PC-3 (cell line): ENCODE measurements at regions of chr16 and their contacts with region 1.

Region 1: DNA sequence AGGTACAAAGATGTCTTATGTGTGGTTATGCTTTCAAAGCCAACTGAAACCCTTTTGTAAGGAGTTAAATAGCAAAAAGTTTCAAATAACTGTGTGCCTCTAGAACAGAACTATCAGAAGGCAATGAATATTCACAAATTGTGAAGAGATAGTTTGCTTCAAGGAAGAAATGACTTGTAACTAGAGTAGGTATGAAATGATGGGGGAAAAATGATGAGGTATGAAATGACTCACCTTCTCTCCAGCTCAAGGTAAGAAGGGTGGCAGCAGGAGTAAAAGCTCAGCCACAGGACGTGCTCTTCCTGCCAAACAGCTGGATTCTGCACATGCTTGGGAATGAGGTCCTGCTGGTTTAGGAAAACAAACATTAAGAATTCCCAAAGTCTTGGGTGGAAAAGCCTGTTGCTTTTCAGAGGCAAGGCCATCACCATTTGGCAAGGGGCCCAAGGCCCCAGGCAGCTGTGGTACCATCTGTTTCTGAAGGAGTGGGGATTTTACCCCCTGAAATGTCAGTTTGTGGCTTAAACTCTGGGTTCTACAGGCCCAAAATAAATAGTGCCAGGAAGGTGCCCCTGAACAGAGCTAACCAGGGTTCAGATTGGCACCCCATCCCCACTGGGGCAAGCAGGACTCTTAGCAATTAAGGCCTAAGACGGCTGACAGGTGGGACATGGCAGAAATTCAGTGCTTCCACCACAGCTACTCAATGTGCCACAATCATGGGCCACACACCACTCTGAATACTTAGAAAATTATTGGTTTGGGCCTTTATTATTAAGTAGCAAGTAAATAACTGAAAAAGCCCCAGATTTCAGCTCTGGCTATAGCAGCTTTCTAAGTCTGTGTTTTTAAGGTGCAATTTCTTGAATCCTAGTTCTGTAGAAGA is 13.3 kb downstream of the HERPUD1 start:
- DNase-seq: peak; percentile 65
- ATAC-seq: peak; percentile 29; the same call in 1 of the 2 replicates
- H3K4me3 ChIP-seq: no peak overlapping the region
- H3K27ac ChIP-seq: peak overlapping the region; percentile 23; the same call in 1 of the 2 replicates
- H3K4me1 ChIP-seq: peaks cover 17% of the 10 kb centered on the region
- H3K27me3 ChIP-seq: no peaks in the 10 kb centered on the region
- CTCF ChIP-seq: no peak

Region 2: GRCh38 chr16:56866943-56867830 is 78.0 kb before region 1 on chr16:
- CTCF ChIA-PET with region 1: no interaction called
- POLR2A ChIA-PET with region 1: no interaction called
- intact Hi-C with region 1: loop called (anchors 5 kb)
- DNase-seq: peak; percentile 65
- ATAC-seq: peak; percentile 49
- H3K4me3 ChIP-seq: no peak overlapping the region
- H3K27ac ChIP-seq: no peak overlapping the region
- H3K4me1 ChIP-seq: no peaks in the 10 kb centered on the region
- H3K27me3 ChIP-seq: no peaks in the 10 kb centered on the region
- CTCF ChIP-seq: peak; percentile 70

Region 3: DNA sequence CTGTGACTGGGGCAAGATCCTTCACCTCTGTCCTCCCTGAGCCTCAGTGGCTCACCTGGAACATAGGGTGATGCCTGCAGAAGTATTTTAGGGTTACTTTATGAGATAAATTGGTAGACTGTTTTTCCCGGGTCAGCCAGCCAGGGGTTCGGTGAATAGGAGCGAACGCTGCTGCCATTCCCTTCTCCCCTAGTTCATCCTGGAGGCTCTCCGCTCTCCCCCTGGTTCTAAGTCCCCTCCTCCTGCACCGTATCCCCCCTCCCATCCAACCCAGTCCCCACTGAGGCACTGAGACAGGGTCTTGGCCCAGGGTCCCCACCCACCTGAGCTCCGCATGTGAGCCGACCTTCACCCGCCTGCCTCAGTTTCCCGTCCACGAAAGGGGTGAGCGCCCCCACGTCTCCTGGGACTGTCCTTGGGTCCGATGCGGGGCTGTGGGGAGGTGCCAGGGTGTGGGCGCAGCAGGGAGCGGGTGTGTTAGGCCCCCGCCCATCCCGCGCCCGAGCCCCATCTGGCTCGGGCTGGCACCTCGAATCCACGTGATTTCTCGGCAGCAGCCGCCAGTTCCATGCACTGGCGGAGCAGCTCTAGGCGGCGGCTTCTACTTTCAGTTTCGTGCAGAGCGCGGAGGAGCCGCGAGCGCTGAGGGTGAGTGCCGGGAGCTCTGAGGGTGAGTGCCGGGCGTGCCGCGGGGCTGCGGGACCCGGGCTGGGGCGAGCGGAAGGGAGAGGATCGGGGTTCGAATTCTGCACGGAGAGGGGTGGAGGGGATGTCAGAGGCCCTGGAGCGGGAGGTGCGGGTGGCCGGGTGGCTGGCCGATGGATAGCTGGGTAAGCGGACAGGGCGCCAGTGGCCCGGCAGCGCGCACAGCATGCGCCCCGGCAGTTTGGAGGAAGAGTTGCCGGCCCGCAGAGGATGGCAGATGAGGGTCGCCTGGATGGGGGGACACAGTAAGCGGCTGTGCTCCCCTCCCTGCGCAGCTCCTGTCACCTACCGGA is 44.0 kb after region 1 on chr16 and contains the start of gene NLRC5:
- CTCF ChIA-PET with region 1: no interaction called
- POLR2A ChIA-PET with region 1: interaction called, 3 read pairs
- intact Hi-C with region 1: loop called (anchors 5 kb)
- DNase-seq: peak; percentile 63
- ATAC-seq: peak; percentile 82
- H3K4me3 ChIP-seq: peak within 1 kb of the TSS; percentile 90
- H3K27ac ChIP-seq: no peak within 1 kb of the TSS
- H3K4me1 ChIP-seq: peaks cover 13% of the 10 kb centered on the region
- H3K27me3 ChIP-seq: no peaks in the 10 kb centered on the region
- CTCF ChIP-seq: no peak
- total RNA-seq, gene NLRC5: 0.98 and 4.4 TPM in 2 replicates

Region 4: DNA sequence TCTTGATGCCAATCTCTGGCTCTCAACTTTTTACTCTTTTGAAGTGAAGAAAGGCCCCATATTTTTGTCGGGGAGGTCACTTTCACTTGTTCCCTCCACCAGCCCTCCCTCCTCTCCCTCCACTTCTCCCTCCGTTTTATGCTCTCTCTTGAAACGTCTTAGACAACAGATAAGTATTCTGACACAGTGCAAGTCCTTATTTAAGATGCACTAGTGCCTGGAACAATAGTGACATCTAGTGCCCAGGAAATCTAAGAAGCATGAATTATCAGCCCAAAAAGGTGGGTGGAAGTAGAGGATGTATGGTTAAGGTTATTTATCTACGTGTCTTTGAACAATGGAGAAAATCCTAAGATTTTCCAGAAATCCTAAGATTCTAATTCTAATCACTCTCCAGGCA is 222.8 kb after region 1 on chr16:
- CTCF ChIA-PET with region 1: no interaction called
- POLR2A ChIA-PET with region 1: no interaction called
- intact Hi-C with region 1: loop called (anchors 5 kb)
- DNase-seq: peak; percentile 57
- ATAC-seq: peak; percentile 63
- H3K4me3 ChIP-seq: no peak overlapping the region
- H3K27ac ChIP-seq: no peak overlapping the region
- H3K4me1 ChIP-seq: no peaks in the 10 kb centered on the region
- H3K27me3 ChIP-seq: no peaks in the 10 kb centered on the region
- CTCF ChIP-seq: peak; percentile 71